Endothelial cell of umbilical vein (primary cell): ENCODE measurements at regions of chr9 and their contacts with region 1.

Region 1: DNA sequence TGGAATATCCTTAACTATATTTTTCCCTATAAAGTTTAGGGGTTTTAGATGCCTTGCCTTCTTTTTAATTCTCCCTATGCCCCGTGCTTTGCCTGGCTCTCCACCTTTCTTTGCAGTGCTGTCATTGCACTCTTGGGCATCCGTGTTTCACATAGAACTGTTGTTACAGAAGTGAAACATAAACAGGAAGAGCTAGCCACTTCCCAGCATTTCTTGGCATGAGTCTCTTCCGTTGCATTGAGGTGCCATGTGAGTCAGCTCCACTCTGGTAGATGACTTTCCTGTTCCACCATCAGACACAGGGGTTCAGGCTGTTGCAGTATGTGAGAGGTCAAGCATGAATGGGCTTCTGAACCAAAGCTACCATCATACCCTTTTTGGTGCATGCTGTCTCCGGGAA is 73.4 kb downstream of the ANGPTL2 start:
- DNase-seq: peak; percentile 98
- H3K4me3 ChIP-seq: no peak overlapping the region
- H3K27ac ChIP-seq: peak overlapping the region; percentile 80
- H3K4me1 ChIP-seq: peaks cover 40% of the 10 kb centered on the region
- H3K27me3 ChIP-seq: no peaks in the 10 kb centered on the region
- CTCF ChIP-seq: peak; percentile 19 to 22
- POLR2A ChIP-seq: peak; percentile 58

Region 2: GRCh38 chr9:126975327-126976220 is 73.5 kb before region 1 on chr9:
- CTCF ChIA-PET with region 1: interaction called, 3 read pairs
- POLR2A ChIA-PET with region 1: no interaction called
- dilution Hi-C with region 1: no loop called
- intact Hi-C with region 1: loop called (anchors 5 kb)
- DNase-seq: no peak
- H3K4me3 ChIP-seq: no peak overlapping the region
- H3K27ac ChIP-seq: no peak overlapping the region
- H3K4me1 ChIP-seq: peaks cover 14% of the 10 kb centered on the region
- H3K27me3 ChIP-seq: no peaks in the 10 kb centered on the region
- CTCF ChIP-seq: no peak
- POLR2A ChIP-seq: no peak

Region 3: DNA sequence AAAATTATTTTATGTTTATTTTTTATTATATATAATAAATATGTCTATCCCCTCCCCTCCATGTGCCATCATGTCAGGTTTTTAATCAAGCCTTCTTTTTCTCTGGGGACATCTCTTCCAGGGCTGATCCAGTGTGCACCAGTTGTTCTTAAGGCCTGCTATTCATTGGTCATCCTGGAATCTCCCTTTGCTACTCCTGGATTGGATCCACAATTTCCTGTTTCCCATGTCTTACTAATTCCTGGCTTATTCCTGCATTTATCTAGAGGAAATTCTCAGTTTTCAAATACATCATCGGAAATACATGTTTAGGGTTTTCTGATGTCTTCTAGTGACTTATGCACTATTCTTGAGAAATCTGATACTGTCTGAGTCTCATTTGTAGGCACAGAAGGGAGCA is 16.5 kb after region 1 on chr9:
- CTCF ChIA-PET with region 1: interaction called, 10 read pairs
- POLR2A ChIA-PET with region 1: no interaction called
- dilution Hi-C with region 1: no loop called
- intact Hi-C with region 1: no loop called
- DNase-seq: peak; percentile 94
- H3K4me3 ChIP-seq: no peak overlapping the region
- H3K27ac ChIP-seq: peak overlapping the region; percentile 75
- H3K4me1 ChIP-seq: peaks cover 13% of the 10 kb centered on the region
- H3K27me3 ChIP-seq: no peaks in the 10 kb centered on the region
- CTCF ChIP-seq: no peak
- POLR2A ChIP-seq: no peak

Region 4: DNA sequence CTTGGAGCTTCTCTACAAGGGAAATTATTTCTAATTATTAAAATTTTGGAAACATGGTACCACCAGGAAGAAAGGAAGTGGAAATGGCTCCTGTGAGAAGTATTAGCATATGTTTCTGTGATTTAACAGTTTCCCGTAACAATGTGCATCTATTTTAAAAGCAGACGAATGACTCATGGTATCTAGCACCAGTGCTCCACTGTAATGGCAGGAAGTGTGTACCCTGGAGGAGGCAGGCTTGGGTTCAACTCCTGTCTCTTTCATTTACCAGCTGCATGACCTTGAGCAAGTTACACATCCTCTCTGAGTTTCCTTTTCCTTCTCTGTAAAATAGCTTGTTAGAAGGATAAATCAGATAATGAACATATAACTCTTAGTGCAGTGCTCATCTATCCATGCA is 114.4 kb after region 1 on chr9:
- CTCF ChIA-PET with region 1: interaction called, 11 read pairs
- POLR2A ChIA-PET with region 1: interaction called, 3 read pairs
- dilution Hi-C with region 1: no loop called
- intact Hi-C with region 1: loop called (anchors 1 kb)
- DNase-seq: peak; percentile 96
- H3K4me3 ChIP-seq: no peak overlapping the region
- H3K27ac ChIP-seq: peak overlapping the region; percentile 68
- H3K4me1 ChIP-seq: peaks cover 17% of the 10 kb centered on the region
- H3K27me3 ChIP-seq: no peaks in the 10 kb centered on the region
- CTCF ChIP-seq: no peak
- POLR2A ChIP-seq: no peak

Region 5: GRCh38 chr9:127199001-127199791 is 150.2 kb after region 1 on chr9:
- CTCF ChIA-PET with region 1: interaction called, 4 read pairs
- POLR2A ChIA-PET with region 1: no interaction called
- dilution Hi-C with region 1: no loop called
- intact Hi-C with region 1: loop called (anchors 1 kb)
- DNase-seq: peak; percentile 81
- H3K4me3 ChIP-seq: no peak overlapping the region
- H3K27ac ChIP-seq: no peak overlapping the region
- H3K4me1 ChIP-seq: no peaks in the 10 kb centered on the region
- H3K27me3 ChIP-seq: no peaks in the 10 kb centered on the region
- CTCF ChIP-seq: peak; percentile 82 to 89
- POLR2A ChIP-seq: no peak